Activated CD4-positive, alpha-beta T cell treated with anti-CD3 and anti-CD28 coated beads for 36 hours (primary cell): ENCODE measurements at regions of chr20 and their contacts with region 1.

Region 1: GRCh38 chr20:3045816-3046676 is at the start of gene MRPS26:
- DNase-seq: peak; percentile 92
- ATAC-seq: peak; percentile 94
- H3K4me3 Mint-ChIP-seq: peak within 1 kb of the TSS; percentile 89
- H3K27ac Mint-ChIP-seq: peak within 1 kb of the TSS; percentile 88
- H3K4me1 Mint-ChIP-seq: peaks cover 27% of the 10 kb centered on the region
- H3K27me3 Mint-ChIP-seq: no peaks in the 10 kb centered on the region
- total RNA-seq, gene MRPS26: 107 to 153 TPM

Region 2: GRCh38 chr20:3204124-3204822 is 158.2 kb after region 1 on chr20 and contains the start of gene DDRGK1:
- CTCF ChIA-PET with region 1: no interaction called
- POLR2A ChIA-PET with region 1: no interaction called
- intact Hi-C with region 1: loop called (anchors 1 to 5 kb)
- DNase-seq: peak; percentile 94
- ATAC-seq: peak; percentile 91
- H3K4me3 Mint-ChIP-seq: peak within 1 kb of the TSS; percentile 92
- H3K27ac Mint-ChIP-seq: peak within 1 kb of the TSS; percentile 98
- H3K4me1 Mint-ChIP-seq: peaks cover 12% of the 10 kb centered on the region
- H3K27me3 Mint-ChIP-seq: no peaks in the 10 kb centered on the region
- total RNA-seq, gene DDRGK1: 49.3 to 52.2 TPM

Region 3: GRCh38 chr20:3374296-3374695 is 328.2 kb after region 1 on chr20:
- CTCF ChIA-PET with region 1: no interaction called
- POLR2A ChIA-PET with region 1: no interaction called
- intact Hi-C with region 1: no loop called
- DNase-seq: no peak
- ATAC-seq: no peak
- H3K4me3 Mint-ChIP-seq: no peak overlapping the region
- H3K27ac Mint-ChIP-seq: no peak overlapping the region
- H3K4me1 Mint-ChIP-seq: no peaks in the 10 kb centered on the region
- H3K27me3 Mint-ChIP-seq: no peaks in the 10 kb centered on the region